PC-9 (cell line): ENCODE measurements at regions of chr9 and their contacts with region 1.

Region 1: GRCh38 chr9:130444565-130445221 is at the start of gene ASS1:
- DNase-seq: peak; percentile 69 to 97
- H3K4me3 ChIP-seq: peak within 1 kb of the TSS; percentile 87
- H3K27ac ChIP-seq: no peak within 1 kb of the TSS
- H3K4me1 ChIP-seq: peaks cover 32% of the 10 kb centered on the region
- H3K27me3 ChIP-seq: no peaks in the 10 kb centered on the region
- CTCF ChIP-seq: no peak
- total RNA-seq, gene ASS1: 255 and 371 TPM in 2 replicates

Region 2: DNA sequence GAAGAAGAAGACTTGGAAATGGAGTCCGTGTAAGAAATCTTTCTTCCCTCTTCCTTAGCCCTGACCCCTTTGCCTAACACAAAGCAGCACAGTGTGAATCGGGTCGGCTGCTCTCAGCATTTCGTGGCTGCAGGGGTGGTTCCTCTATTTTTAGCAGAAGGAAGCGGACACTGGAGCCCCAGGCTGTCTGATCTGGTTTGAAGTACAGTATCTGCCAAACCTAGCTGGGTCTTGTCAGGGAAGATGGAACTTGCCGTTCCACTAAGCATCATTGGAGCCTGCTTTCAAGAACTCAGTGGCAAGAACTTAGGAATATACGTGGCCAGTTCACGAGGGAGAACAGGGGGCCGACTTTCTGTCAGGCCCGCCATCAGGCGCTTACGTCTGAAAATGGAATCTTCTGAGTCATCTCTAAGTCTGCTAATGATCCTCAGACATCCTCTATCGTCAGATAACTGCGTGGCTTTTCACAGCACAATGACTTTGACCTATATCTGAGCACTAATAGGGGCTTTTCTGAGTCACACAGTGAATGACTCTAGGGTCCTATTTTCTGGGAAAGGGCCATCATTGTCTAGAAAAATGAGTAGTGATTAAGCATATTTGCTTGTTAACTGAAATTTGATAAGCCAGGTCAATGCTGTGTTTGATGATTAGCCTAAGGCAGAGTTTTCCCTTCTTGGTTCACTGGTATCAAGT is 315.8 kb before region 1 on chr9:
- CTCF ChIA-PET with region 1: no interaction called
- POLR2A ChIA-PET with region 1: no interaction called
- intact Hi-C with region 1: loop called (anchors 5 kb)
- DNase-seq: peak; percentile 52 to 83
- H3K4me3 ChIP-seq: 0 out of 2 replicates have a peak overlapping the region, but pooled peaks have one; percentile 13
- H3K27ac ChIP-seq: peak overlapping the region; percentile 80
- H3K4me1 ChIP-seq: peaks cover 46% of the 10 kb centered on the region
- H3K27me3 ChIP-seq: no peaks in the 10 kb centered on the region
- CTCF ChIP-seq: no peak

Region 3: DNA sequence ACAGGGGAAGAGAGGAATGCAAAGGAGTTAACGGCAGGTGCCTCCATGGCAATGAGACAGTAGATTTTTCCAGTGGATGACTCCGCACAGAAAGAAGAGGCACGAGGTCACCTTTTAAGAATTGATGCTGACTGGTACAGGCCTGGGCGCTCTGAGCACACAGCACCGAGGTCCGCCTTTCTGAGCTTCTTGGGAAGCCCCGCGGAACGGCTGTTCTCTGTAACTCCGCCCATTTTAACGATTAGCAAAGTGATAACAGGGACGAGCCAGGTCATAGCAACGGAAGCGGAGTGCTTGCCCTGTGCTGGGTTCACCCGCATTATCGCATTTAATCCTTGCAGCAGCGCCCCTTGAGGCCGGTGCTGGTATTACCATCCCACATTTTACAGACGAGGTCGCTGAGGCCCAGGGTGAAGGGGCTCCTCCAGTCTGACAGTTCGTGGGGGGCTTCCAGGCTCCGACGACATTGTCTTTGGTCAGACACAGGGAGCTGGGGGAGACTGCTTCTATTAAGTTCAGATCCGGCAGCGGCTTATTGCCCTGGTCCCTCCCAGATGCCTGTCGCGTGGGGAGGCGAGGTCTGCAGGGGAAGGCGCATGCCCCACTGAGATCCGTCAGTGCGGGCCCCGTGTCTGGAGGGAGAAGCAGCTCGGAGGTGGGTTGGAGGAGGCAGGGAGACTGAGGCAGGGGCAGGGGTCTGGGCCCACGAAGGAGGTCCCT is 201.5 kb before region 1 on chr9:
- CTCF ChIA-PET with region 1: no interaction called
- POLR2A ChIA-PET with region 1: no interaction called
- intact Hi-C with region 1: loop called (anchors 5 kb)
- DNase-seq: peak in 1 of 2 experiments; percentile 70
- H3K4me3 ChIP-seq: no peak overlapping the region
- H3K27ac ChIP-seq: no peak overlapping the region
- H3K4me1 ChIP-seq: no peaks in the 10 kb centered on the region
- H3K27me3 ChIP-seq: no peaks in the 10 kb centered on the region
- CTCF ChIP-seq: peak; percentile 98

Region 4: DNA sequence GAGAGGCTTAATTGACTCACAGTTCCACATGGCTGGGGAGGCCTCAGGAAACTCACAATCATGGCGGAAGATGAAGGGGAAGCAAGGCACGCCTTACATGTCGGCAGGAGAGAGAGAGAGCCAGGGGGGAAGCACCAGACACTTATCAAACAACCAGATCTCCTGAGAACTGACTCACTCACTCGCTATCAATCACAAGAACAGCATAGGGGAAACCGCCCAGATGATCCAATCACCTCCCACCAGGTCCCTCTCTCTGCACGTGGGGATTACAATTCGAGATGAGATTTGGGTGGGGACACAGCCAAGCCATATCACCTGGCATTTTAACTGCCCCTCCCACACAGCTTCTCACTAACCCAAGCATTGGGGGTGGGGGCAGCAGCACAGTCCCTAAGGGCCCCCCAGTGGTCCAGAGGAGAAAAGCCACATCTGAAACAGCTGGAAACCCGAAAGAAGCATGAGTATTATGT is 76.0 kb before region 1 on chr9:
- CTCF ChIA-PET with region 1: no interaction called
- POLR2A ChIA-PET with region 1: no interaction called
- intact Hi-C with region 1: loop called (anchors 1 kb)
- DNase-seq: peak; percentile 60 to 76
- H3K4me3 ChIP-seq: no peak overlapping the region
- H3K27ac ChIP-seq: no peak overlapping the region
- H3K4me1 ChIP-seq: peaks cover 33% of the 10 kb centered on the region
- H3K27me3 ChIP-seq: no peaks in the 10 kb centered on the region
- CTCF ChIP-seq: 0 out of 2 replicates have a peak, but pooled peaks have one; percentile 26

Region 5: GRCh38 chr9:130396581-130396980 is 48.1 kb before region 1 on chr9:
- CTCF ChIA-PET with region 1: no interaction called
- POLR2A ChIA-PET with region 1: interaction called, 18 read pairs
- intact Hi-C with region 1: no loop called
- DNase-seq: no peak
- H3K4me3 ChIP-seq: no peak overlapping the region
- H3K27ac ChIP-seq: no peak overlapping the region
- H3K4me1 ChIP-seq: no peaks in the 10 kb centered on the region
- H3K27me3 ChIP-seq: no peaks in the 10 kb centered on the region
- CTCF ChIP-seq: no peak